ENCODE measurements at regions of chr14 and their contacts with region 1.

Region 1: DNA sequence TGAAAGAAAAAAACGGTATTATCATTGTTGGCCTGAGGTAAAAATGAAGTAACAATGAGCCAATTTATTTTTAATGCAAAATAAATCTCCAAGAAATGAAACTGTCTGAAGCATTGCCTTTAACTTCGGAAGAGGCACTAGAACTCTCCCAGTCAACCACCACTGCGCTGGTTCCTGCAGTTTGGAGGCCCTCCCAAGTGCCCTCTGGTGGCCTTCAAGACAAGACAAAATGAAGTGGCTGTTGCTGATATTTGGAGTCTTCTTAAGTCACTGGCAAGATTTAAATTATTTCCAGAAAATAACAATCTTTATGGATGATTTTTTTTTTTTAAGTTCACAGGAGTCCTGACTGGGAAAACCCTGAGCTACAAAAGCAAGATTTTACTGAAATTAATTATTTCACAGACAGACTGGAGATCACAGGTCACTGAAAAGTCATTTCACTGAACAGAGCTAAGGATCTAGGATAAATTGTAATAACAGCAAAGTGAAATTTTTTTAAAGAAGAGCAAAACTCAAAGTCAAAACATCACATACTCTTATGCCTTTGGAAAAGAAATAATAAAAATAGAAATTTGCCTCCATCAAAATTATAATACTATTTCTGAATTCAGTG is 58.2 kb downstream of the DICER1 start:
- H3K4me3 Mint-ChIP-seq: no peak overlapping the region
- H3K27ac Mint-ChIP-seq: no peak overlapping the region
- H3K4me1 Mint-ChIP-seq: peaks cover 14% of the 10 kb centered on the region
- H3K27me3 Mint-ChIP-seq: no peaks in the 10 kb centered on the region

Region 2: DNA sequence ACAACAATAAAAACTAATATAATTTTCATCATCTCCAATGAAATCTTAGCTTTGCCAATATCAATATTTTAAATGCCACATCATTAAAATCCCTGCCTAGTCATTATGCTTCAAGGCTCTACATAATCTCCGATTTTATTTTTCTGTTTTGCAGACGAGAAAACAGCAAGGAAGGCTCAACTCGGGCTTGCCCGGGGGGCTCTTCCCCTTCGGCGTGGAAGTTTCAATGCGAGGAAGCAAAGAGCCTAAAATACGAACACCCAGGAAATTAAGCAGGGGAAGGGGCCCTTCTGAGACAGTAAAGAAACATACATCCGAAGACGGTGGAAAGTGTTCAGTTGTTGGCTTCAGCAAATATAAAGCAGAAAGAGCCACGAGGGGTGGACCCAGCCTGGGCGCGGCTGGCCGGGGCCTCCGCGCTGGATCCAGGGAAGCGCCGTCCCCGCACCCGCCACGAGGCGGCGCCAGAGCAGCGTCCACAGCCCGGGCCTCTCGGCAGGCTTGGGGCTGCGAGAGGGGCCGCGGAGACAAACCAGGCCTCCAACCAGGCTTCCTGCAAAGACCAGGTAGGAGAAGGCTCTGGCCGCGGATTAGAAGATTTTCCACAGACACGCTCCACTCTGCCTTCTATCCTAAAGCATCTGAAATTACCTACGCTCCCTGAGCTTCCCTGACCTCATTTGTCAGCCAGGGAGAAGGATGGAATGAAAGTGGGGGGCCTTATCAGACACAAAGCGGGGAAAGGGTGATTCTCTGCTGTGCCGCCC is 409.7 kb before region 1 on chr14:
- intact Hi-C with region 1: loop called (anchors 2 kb)
- H3K4me3 Mint-ChIP-seq: peak overlapping the region; percentile 60
- H3K27ac Mint-ChIP-seq: no peak overlapping the region
- H3K4me1 Mint-ChIP-seq: peaks cover 5% of the 10 kb centered on the region
- H3K27me3 Mint-ChIP-seq: peaks cover 40% of the 10 kb centered on the region

Region 3: DNA sequence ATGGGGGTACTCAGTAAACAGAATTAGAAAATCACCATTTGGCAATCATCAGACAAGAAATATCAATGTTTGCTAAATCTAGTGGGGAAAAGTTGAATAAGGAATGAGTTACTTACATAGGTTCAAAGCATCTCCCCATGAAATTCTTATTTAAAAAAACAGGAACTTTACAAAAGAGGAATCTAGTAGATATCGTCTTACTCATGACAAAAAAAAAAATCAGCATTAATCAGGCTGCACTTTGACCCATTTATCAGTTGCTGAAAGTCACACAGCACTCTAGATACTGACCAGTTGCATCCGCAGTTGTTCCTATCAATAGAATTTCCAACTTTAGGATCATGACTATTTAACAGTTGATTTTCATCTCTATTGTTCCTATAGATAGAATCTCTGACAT is 64.0 kb after region 1 on chr14:
- intact Hi-C with region 1: no loop called
- H3K4me3 Mint-ChIP-seq: peak overlapping the region; percentile 53
- H3K27ac Mint-ChIP-seq: peak overlapping the region; percentile 66
- H3K4me1 Mint-ChIP-seq: peaks cover 55% of the 10 kb centered on the region
- H3K27me3 Mint-ChIP-seq: no peaks in the 10 kb centered on the region

Measured in dendritic cell treated with granulocyte-macrophage colony-stimulating factor and Interleukin-4, amounts not matched to agents 40 ng/mL and 50 ng/mL, for 4 days (primary cell).